Psoas muscle (tissue), 8 donors: ENCODE measurements at regions of chr5 and their contacts with region 1.

Region 1: GRCh38 chr5:611721-612486 is at the start of gene CEP72:
- DNase-seq: peak; percentile 93 to 96
- ATAC-seq: peak; percentile 98 to 100 (median 99)
- H3K4me3 ChIP-seq: peak within 1 kb of the TSS; percentile 89
- H3K27ac ChIP-seq: no peak within 1 kb of the TSS
- H3K4me1 ChIP-seq: no peaks in the 10 kb centered on the region
- H3K27me3 ChIP-seq: peaks cover 0 to 2% (median 0%) of the 10 kb centered on the region in 3 donors
- CTCF ChIP-seq: no peak
- total RNA-seq, gene CEP72: 0.48 to 2.4 (median 1.1) TPM

Region 2: GRCh38 chr5:472656-473553 is 139.0 kb before region 1 on chr5:
- intact Hi-C with region 1: loop called (anchors 10 kb)
- DNase-seq: peak; percentile 89 to 94
- ATAC-seq: peak; percentile 84 to 93 (median 88)
- H3K4me3 ChIP-seq: peak overlapping the region; percentile 72
- H3K27ac ChIP-seq: peak overlapping the region; percentile 86
- H3K4me1 ChIP-seq: peaks cover 14% of the 10 kb centered on the region
- H3K27me3 ChIP-seq: peaks cover 0 to 30% (median 21%) of the 10 kb centered on the region in 3 donors
- CTCF ChIP-seq: no peak

Region 3: GRCh38 chr5:902129-902916 is 290.4 kb after region 1 on chr5:
- intact Hi-C with region 1: no loop called
- DNase-seq: no peak
- ATAC-seq: no peak
- H3K4me3 ChIP-seq: no peak overlapping the region
- H3K27ac ChIP-seq: peak overlapping the region; percentile 21
- H3K4me1 ChIP-seq: no peaks in the 10 kb centered on the region
- H3K27me3 ChIP-seq: no peaks in the 10 kb centered on the region
- CTCF ChIP-seq: no peak